ENCODE measurements at regions of chr9 and their contacts with region 1.

Region 1: GRCh38 chr9:127004946-127005769 is 90.6 kb downstream of the RALGPS1 start:
- DNase-seq: peak; percentile 13 to 88 (median 70)
- ATAC-seq: peak; percentile 96 to 99
- H3K4me3 Mint-ChIP-seq: peak overlapping the region in 8 of 10 donors; percentile 3 to 54 (median 49)
- H3K27ac Mint-ChIP-seq: peak overlapping the region; percentile 2 to 92 (median 78)
- H3K4me1 Mint-ChIP-seq: peaks cover 18 to 32% (median 23%) of the 10 kb centered on the region in 4 donors
- H3K27me3 Mint-ChIP-seq: peaks cover 14 to 44% (median 22%) of the 10 kb centered on the region in 5 donors

Region 2: GRCh38 chr9:126985870-126986498 is 19.2 kb before region 1 on chr9:
- POLR2A ChIA-PET with region 1: interaction called, 10 read pairs
- DNase-seq: peak; percentile 57 to 97 (median 89)
- ATAC-seq: peak; percentile 88 to 89
- H3K4me3 Mint-ChIP-seq: peak overlapping the region; percentile 53 to 82 (median 75)
- H3K27ac Mint-ChIP-seq: peak overlapping the region; percentile 4 to 92 (median 80)
- H3K4me1 Mint-ChIP-seq: peaks cover 43 to 77% (median 69%) of the 10 kb centered on the region in 4 donors
- H3K27me3 Mint-ChIP-seq: peaks cover 46 to 84% (median 60%) of the 10 kb centered on the region in 5 donors